ENCODE measurements at regions of chr17 and their contacts with region 1.

Region 1: GRCh38 chr17:45218895-45219661 is 2.6 kb upstream of the FMNL1 start:
- DNase-seq: no peak
- ATAC-seq: peak; percentile 42
- H3K4me3 ChIP-seq: no peak overlapping the region
- H3K27ac ChIP-seq: no peak overlapping the region
- H3K4me1 ChIP-seq: peaks cover 13% of the 10 kb centered on the region
- H3K27me3 ChIP-seq: no peaks in the 10 kb centered on the region
- CTCF ChIP-seq: peak; percentile 92 to 97 (median 94)
- EP300 ChIP-seq: no peak
- POLR2A ChIP-seq: no peak
- RAD21 ChIP-seq: peak; percentile 97

Region 2: GRCh38 chr17:45148183-45149036 is 70.7 kb before region 1 on chr17 and contains the start of gene HEXIM1:
- CTCF ChIA-PET with region 1: interaction called, 43 read pairs
- POLR2A ChIA-PET with region 1: interaction called, 39 read pairs
- RAD21 ChIA-PET with region 1: interaction called, 9 read pairs
- SMC1A ChIA-PET with region 1: interaction called, 11 read pairs
- in situ Hi-C with region 1: no loop called
- intact Hi-C with region 1: no loop called
- DNase-seq: peak; percentile 95
- ATAC-seq: peak; percentile 83
- H3K4me3 ChIP-seq: peak within 1 kb of the TSS; percentile 96
- H3K27ac ChIP-seq: peak within 1 kb of the TSS; percentile 100
- H3K4me1 ChIP-seq: peaks cover 23% of the 10 kb centered on the region
- H3K27me3 ChIP-seq: no peaks in the 10 kb centered on the region
- CTCF ChIP-seq: no peak
- EP300 ChIP-seq: peak; percentile 13 to 14; a peak in 1 of 4 replicates
- POLR2A ChIP-seq: peak; percentile 100
- RAD21 ChIP-seq: no peak
- polyA plus RNA-seq, gene HEXIM1: 1.9 to 2.1 TPM

Region 3: DNA sequence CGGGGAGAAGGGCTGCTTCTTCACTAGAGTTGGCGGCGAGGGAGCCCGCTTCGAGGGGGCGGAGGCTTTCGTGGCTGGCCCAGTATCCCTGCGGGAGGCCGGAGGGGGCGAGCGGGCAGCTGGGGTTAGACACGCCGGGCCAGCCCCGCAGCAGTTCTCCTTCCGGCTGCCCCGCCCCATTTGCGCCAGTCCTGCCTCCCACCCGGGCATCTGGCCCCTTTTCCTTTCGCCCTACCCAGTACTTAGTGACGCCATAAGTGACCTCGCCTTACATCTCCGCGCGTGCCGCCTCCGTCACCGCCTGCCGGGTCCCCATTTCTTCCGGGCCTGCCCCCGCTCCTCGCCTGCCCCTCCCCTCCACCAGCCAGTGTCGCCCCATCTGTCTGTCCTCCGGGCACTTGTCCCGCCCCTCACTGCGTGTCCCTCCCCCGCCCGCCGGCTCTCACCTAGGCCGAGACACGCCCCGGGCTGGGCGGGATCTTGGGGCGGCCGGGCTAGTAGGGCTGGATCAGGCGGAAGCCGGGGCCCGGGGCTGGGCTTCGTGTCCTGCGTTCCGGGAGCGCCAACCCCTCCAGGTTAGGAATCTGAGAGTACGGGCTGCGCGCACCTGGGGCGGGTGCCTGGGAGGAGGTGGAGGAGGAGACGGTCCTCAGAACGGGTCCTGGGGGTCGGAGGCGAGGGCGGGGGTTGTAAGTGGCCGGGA is 28.5 kb after region 1 on chr17:
- CTCF ChIA-PET with region 1: interaction called, 36 read pairs
- POLR2A ChIA-PET with region 1: interaction called, 3 read pairs
- RAD21 ChIA-PET with region 1: interaction called, 13 read pairs
- SMC1A ChIA-PET with region 1: interaction called, 8 read pairs
- in situ Hi-C with region 1: no loop called
- intact Hi-C with region 1: no loop called
- DNase-seq: peak; percentile 78
- ATAC-seq: peak; percentile 95
- H3K4me3 ChIP-seq: peak overlapping the region; percentile 89
- H3K27ac ChIP-seq: peak overlapping the region; percentile 98
- H3K4me1 ChIP-seq: peaks cover 14% of the 10 kb centered on the region
- H3K27me3 ChIP-seq: no peaks in the 10 kb centered on the region
- CTCF ChIP-seq: no peak
- EP300 ChIP-seq: no peak; a peak in 1 of 4 replicates
- POLR2A ChIP-seq: peak; percentile 91
- RAD21 ChIP-seq: no peak

Region 4: DNA sequence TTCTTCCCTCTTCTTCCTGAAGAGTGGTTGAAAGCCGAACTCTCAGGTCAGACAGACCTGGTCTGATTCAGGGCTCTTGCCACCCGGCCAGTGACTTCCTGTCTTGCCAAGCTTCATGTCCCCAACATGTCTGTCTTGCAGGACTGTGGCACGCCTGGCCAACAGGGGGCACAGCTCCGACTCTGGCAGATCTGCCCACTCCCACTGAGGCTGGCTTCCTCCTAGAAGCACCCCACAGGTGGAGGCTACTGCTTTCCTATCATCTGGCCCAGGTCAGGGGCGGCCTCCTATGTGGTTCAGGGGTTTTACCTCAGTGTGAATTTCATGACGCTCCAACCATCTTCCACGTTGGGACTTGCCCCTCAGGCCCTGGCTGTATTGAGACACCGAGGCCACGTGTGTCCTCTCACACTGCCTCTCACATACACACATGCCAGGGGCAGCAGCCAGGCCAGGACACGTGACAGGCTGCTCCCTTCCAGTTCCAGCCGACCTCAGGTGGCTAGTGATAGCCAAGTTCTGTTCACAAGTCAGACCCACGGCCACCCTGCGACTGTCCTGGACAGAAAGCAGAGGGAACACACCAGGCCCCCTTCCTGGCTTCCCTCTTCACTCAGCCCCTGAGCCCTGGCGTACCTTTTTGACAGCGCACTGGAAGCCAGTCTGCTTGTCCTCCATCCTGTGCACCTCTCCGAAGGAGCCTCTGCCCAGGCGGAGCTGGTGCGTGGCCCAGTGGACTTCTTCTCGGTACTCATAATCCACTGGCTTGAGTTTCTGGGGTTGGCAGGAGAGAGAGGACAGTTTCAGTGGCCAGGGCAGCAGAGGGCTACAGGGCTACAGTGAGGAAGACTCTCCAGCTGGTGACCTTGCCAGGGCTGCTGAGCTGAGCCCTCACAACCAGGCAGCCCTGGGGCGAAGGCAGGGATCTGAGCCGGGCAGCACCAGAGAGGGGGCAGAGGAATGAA is 65.4 kb after region 1 on chr17:
- CTCF ChIA-PET with region 1: interaction called, 10 read pairs
- POLR2A ChIA-PET with region 1: interaction called, 3 read pairs
- RAD21 ChIA-PET with region 1: interaction called, 3 read pairs
- SMC1A ChIA-PET with region 1: no interaction called
- in situ Hi-C with region 1: no loop called
- intact Hi-C with region 1: loop called (anchors 5 kb)
- DNase-seq: no peak
- ATAC-seq: peak; percentile 86
- H3K4me3 ChIP-seq: no peak overlapping the region
- H3K27ac ChIP-seq: peak overlapping the region; percentile 44
- H3K4me1 ChIP-seq: no peaks in the 10 kb centered on the region
- H3K27me3 ChIP-seq: no peaks in the 10 kb centered on the region
- CTCF ChIP-seq: peak; percentile 26 to 45 (median 43); a peak in 3 of 6 replicates
- EP300 ChIP-seq: no peak
- POLR2A ChIP-seq: peak; percentile 40
- RAD21 ChIP-seq: peak; percentile 26; the same call in 1 of the 2 replicates

Region 5: GRCh38 chr17:45317112-45317928 is 98.2 kb after region 1 on chr17:
- CTCF ChIA-PET with region 1: interaction called, 26 read pairs
- POLR2A ChIA-PET with region 1: interaction called, 140 read pairs
- RAD21 ChIA-PET with region 1: interaction called, 9 read pairs
- SMC1A ChIA-PET with region 1: interaction called, 21 read pairs
- in situ Hi-C with region 1: no loop called
- intact Hi-C with region 1: no loop called
- DNase-seq: peak; percentile 100
- ATAC-seq: peak; percentile 81
- H3K4me3 ChIP-seq: peak overlapping the region; percentile 92
- H3K27ac ChIP-seq: peak overlapping the region; percentile 91
- H3K4me1 ChIP-seq: peaks cover 39% of the 10 kb centered on the region
- H3K27me3 ChIP-seq: no peaks in the 10 kb centered on the region
- CTCF ChIP-seq: no peak
- EP300 ChIP-seq: no peak
- POLR2A ChIP-seq: peak; percentile 61
- RAD21 ChIP-seq: no peak

Region 6: DNA sequence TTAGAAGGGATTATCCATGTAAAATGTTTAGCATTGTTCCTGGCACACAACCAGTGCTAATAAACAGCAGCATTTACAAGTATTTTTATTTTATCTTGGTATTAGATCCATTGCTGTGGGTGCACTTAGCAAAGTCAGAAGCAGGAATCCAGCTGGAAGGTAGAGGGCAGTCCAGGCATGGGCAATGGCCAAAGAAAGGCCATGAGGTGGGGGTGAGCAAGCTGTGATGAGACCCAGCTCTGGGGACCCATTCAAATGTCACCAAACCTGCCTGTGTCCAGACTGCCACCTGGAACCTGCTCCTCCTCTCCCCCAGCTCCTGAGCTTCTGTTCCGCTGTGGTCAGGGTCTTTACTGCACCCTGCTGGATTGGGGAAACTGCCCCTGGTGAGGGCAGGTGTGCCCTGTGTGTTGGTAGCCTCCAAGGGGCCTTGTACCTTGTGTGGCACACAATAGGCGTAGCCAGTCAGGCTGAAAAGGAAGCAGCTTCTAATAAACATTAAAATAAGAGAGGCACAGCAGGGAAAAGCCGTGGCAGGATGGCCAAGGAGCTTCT is 447.0 kb after region 1 on chr17:
- CTCF ChIA-PET with region 1: no interaction called
- POLR2A ChIA-PET with region 1: no interaction called
- RAD21 ChIA-PET with region 1: no interaction called
- SMC1A ChIA-PET with region 1: no interaction called
- in situ Hi-C with region 1: no loop called
- intact Hi-C with region 1: no loop called
- DNase-seq: no peak
- ATAC-seq: no peak
- H3K4me3 ChIP-seq: no peak overlapping the region
- H3K27ac ChIP-seq: no peak overlapping the region
- H3K4me1 ChIP-seq: no peaks in the 10 kb centered on the region
- H3K27me3 ChIP-seq: peaks cover 0 to 2% of the 10 kb centered on the region in 2 experiments; a peak in 2 of 4 replicates
- CTCF ChIP-seq: no peak
- EP300 ChIP-seq: no peak
- POLR2A ChIP-seq: no peak
- RAD21 ChIP-seq: no peak

Region 7: GRCh38 chr17:45907750-45908395 is 688.8 kb after region 1 on chr17:
- CTCF ChIA-PET with region 1: no interaction called
- POLR2A ChIA-PET with region 1: no interaction called
- RAD21 ChIA-PET with region 1: no interaction called
- SMC1A ChIA-PET with region 1: no interaction called
- in situ Hi-C with region 1: no loop called
- intact Hi-C with region 1: no loop called
- DNase-seq: no peak
- ATAC-seq: no peak
- H3K4me3 ChIP-seq: no peak overlapping the region
- H3K27ac ChIP-seq: no peak overlapping the region
- H3K4me1 ChIP-seq: no peaks in the 10 kb centered on the region
- H3K27me3 ChIP-seq: peaks cover 0 to 2% of the 10 kb centered on the region in 2 experiments; a peak in 3 of 4 replicates
- CTCF ChIP-seq: no peak
- EP300 ChIP-seq: no peak
- POLR2A ChIP-seq: no peak
- RAD21 ChIP-seq: no peak

Measured in GM12878 (cell line).